ENCODE measurements at regions of chr1 and their contacts with region 1.

Region 1: GRCh38 chr1:59699227-59699847 is 115.4 kb upstream of the HOOK1 start:
- DNase-seq: peak; percentile 19
- H3K4me3 Mint-ChIP-seq: no peak overlapping the region
- H3K27ac Mint-ChIP-seq: no peak overlapping the region
- H3K4me1 Mint-ChIP-seq: peaks cover 15% of the 10 kb centered on the region
- H3K27me3 Mint-ChIP-seq: no peaks in the 10 kb centered on the region

Region 2: GRCh38 chr1:58515794-58516401 is 1183.4 kb before region 1 on chr1:
- CTCF ChIA-PET with region 1: no interaction called
- intact Hi-C with region 1: loop called (anchors 2 kb)
- DNase-seq: peak; percentile 35
- H3K4me3 Mint-ChIP-seq: no peak overlapping the region
- H3K27ac Mint-ChIP-seq: peak overlapping the region; percentile 38
- H3K4me1 Mint-ChIP-seq: peaks cover 7% of the 10 kb centered on the region
- H3K27me3 Mint-ChIP-seq: no peaks in the 10 kb centered on the region

Region 3: GRCh38 chr1:58546520-58547308 is 1152.6 kb before region 1 on chr1 and contains the start of gene OMA1:
- CTCF ChIA-PET with region 1: no interaction called
- intact Hi-C with region 1: no loop called
- DNase-seq: peak; percentile 98
- H3K4me3 Mint-ChIP-seq: peak within 1 kb of the TSS; percentile 91
- H3K27ac Mint-ChIP-seq: peak within 1 kb of the TSS; percentile 97
- H3K4me1 Mint-ChIP-seq: peaks cover 13% of the 10 kb centered on the region
- H3K27me3 Mint-ChIP-seq: no peaks in the 10 kb centered on the region
- total RNA-seq, gene OMA1: 15.4 to 16.6 TPM

Region 4: GRCh38 chr1:58739856-58740466 is 959.4 kb before region 1 on chr1:
- CTCF ChIA-PET with region 1: interaction called, 13 read pairs
- intact Hi-C with region 1: loop called (anchors 1 kb)
- DNase-seq: peak; percentile 15
- H3K4me3 Mint-ChIP-seq: no peak overlapping the region
- H3K27ac Mint-ChIP-seq: no peak overlapping the region
- H3K4me1 Mint-ChIP-seq: no peaks in the 10 kb centered on the region
- H3K27me3 Mint-ChIP-seq: no peaks in the 10 kb centered on the region

Region 5: GRCh38 chr1:59071289-59071688 is 628.0 kb before region 1 on chr1:
- CTCF ChIA-PET with region 1: no interaction called
- intact Hi-C with region 1: loop called (anchors 5 kb)
- DNase-seq: peak; percentile 19
- H3K4me3 Mint-ChIP-seq: peak overlapping the region; percentile 37
- H3K27ac Mint-ChIP-seq: peak overlapping the region; percentile 82
- H3K4me1 Mint-ChIP-seq: peaks cover 23% of the 10 kb centered on the region
- H3K27me3 Mint-ChIP-seq: no peaks in the 10 kb centered on the region

Region 6: DNA sequence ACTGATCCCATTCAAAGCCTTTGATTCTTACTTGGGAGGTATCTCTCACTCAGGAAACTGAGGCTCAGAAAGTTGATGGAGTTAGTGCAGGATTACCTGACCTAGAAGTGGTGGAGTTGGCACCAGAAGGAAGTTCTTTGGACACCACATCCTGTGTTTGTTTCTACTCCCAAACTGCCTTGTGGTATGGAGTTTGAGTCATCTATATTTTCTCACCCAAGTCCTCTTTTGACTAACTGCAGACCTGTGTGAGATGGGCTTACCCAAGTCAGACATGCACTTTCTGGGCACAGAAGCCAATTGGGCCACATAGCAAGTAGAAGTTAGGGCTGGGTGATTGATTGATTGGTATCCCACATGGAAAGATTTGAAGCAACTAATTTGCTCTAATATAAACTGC is 366.4 kb before region 1 on chr1:
- CTCF ChIA-PET with region 1: no interaction called
- intact Hi-C with region 1: loop called (anchors 10 kb)
- DNase-seq: peak; percentile 54
- H3K4me3 Mint-ChIP-seq: no peak overlapping the region
- H3K27ac Mint-ChIP-seq: no peak overlapping the region
- H3K4me1 Mint-ChIP-seq: peaks cover 26% of the 10 kb centered on the region
- H3K27me3 Mint-ChIP-seq: no peaks in the 10 kb centered on the region

Region 7: DNA sequence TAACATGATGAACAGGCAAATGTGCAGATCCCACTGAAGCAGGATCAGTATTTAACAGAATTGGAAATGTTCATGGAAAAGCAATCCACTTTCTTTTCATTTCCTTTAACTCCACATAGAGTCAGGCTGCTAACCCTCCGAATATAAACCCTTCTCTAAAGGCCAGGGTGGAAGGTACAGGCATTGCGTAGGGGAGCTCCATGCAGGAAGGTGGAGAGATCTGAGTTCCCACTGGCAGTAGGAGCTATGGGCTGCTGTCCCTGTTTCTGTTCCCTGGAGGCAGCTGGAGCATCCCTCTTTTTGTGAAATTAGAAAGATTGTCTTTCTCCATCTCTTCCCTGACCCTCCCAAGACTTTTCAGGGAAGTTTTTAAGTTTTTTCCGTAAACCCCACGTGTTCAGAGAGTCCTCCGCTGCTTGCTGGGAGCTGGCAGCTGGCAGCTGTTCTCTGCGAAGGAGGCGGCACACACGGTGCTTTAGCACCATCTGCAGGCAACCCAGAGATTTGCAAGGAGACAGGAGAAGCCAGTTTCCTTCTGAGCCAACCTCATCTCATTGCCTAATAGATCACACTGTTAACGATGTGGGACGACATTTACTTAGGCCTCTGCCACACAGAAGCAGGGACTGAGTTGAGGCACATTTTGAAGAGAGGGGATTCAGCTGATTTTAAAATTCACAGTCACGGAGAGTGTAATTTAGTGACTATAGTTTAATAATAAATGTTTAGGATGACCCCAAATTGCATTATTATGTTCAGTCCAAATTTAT is 60.0 kb after region 1 on chr1:
- CTCF ChIA-PET with region 1: interaction called, 10 read pairs
- intact Hi-C with region 1: loop called (anchors 1 kb)
- DNase-seq: peak; percentile 83
- H3K4me3 Mint-ChIP-seq: peak overlapping the region; percentile 47
- H3K27ac Mint-ChIP-seq: peak overlapping the region; percentile 53
- H3K4me1 Mint-ChIP-seq: peaks cover 4% of the 10 kb centered on the region
- H3K27me3 Mint-ChIP-seq: no peaks in the 10 kb centered on the region

Region 8: GRCh38 chr1:59885160-59885832 is 186.0 kb after region 1 on chr1:
- CTCF ChIA-PET with region 1: no interaction called
- intact Hi-C with region 1: no loop called
- DNase-seq: no peak
- H3K4me3 Mint-ChIP-seq: no peak overlapping the region
- H3K27ac Mint-ChIP-seq: no peak overlapping the region
- H3K4me1 Mint-ChIP-seq: no peaks in the 10 kb centered on the region
- H3K27me3 Mint-ChIP-seq: no peaks in the 10 kb centered on the region

Measured in activated naive CD4-positive, alpha-beta T cell treated with anti-CD3 and anti-CD28 coated beads for 36 hours (primary cell).